CD14-positive monocyte (primary cell): ENCODE measurements at regions of chr1 and their contacts with region 1.

Region 1: DNA sequence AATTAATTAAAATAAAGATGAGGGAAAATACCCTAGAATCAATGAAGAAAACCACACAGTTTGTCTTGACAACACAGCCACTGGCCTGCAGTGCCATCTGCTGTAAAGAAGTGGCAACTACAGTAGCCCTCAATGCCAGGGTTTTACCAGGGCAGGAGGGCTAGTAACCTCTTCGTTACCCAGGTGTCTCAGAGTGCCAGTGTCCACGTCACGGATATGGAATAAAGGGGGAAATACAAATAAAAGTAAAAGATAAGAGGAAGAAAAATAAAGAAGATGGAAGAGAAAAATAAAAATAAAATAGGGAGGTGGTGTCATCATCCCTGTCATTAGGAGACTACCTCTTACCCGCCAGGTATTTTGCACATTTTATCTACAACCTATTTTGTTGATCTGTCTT is 14.2 kb upstream of the SLC44A3 start:
- DNase-seq: peak; percentile 44 to 67 (median 64)
- H3K4me3 ChIP-seq: no peak overlapping the region
- H3K4me3 Mint-ChIP-seq: no peak overlapping the region
- H3K27ac ChIP-seq: no peak overlapping the region
- H3K27ac Mint-ChIP-seq: peak overlapping the region in 2 of 7 donors; percentile 64 to 70
- H3K4me1 ChIP-seq: peaks cover 24 to 26% of the 10 kb centered on the region in 2 donors
- H3K4me1 Mint-ChIP-seq: peaks cover 25% of the 10 kb centered on the region
- H3K27me3 ChIP-seq: no peaks in the 10 kb centered on the region
- H3K27me3 Mint-ChIP-seq: peaks cover 0 to 9% (median 4%) of the 10 kb centered on the region in 3 donors
- CTCF ChIP-seq: peak; percentile 100

Region 2: GRCh38 chr1:94481473-94481933 is 324.4 kb before region 1 on chr1:
- intact Hi-C with region 1: loop called (anchors 2 kb)
- DNase-seq: peak; percentile 42 to 59 (median 55)
- H3K4me3 ChIP-seq: no peak overlapping the region
- H3K4me3 Mint-ChIP-seq: no peak overlapping the region
- H3K27ac ChIP-seq: no peak overlapping the region
- H3K27ac Mint-ChIP-seq: no peak overlapping the region
- H3K4me1 ChIP-seq: no peaks in the 10 kb centered on the region
- H3K4me1 Mint-ChIP-seq: no peaks in the 10 kb centered on the region
- H3K27me3 ChIP-seq: no peaks in the 10 kb centered on the region
- H3K27me3 Mint-ChIP-seq: no peaks in the 10 kb centered on the region
- CTCF ChIP-seq: peak; percentile 81

Region 3: GRCh38 chr1:94522304-94522703 is 283.6 kb before region 1 on chr1:
- intact Hi-C with region 1: loop called (anchors 5 to 10 kb)
- DNase-seq: peak in 2 of 3 donors; percentile 31 to 37
- H3K4me3 ChIP-seq: no peak overlapping the region
- H3K4me3 Mint-ChIP-seq: no peak overlapping the region
- H3K27ac ChIP-seq: no peak overlapping the region
- H3K27ac Mint-ChIP-seq: no peak overlapping the region
- H3K4me1 ChIP-seq: peaks cover 0 to 5% of the 10 kb centered on the region in 2 donors
- H3K4me1 Mint-ChIP-seq: peaks cover 11% of the 10 kb centered on the region
- H3K27me3 ChIP-seq: no peaks in the 10 kb centered on the region
- H3K27me3 Mint-ChIP-seq: peaks cover 0 to 3% (median 1%) of the 10 kb centered on the region in 3 donors
- CTCF ChIP-seq: peak; percentile 34